RWPE1 (cell line): ENCODE measurements at regions of chr4 and their contacts with region 1.

Region 1: GRCh38 chr4:80184053-80184790 is 13.1 kb upstream of the PRDM8 start:
- DNase-seq: peak; percentile 74
- H3K27ac ChIP-seq: peak overlapping the region; percentile 53
- CTCF ChIP-seq: peak; percentile 96

Region 2: DNA sequence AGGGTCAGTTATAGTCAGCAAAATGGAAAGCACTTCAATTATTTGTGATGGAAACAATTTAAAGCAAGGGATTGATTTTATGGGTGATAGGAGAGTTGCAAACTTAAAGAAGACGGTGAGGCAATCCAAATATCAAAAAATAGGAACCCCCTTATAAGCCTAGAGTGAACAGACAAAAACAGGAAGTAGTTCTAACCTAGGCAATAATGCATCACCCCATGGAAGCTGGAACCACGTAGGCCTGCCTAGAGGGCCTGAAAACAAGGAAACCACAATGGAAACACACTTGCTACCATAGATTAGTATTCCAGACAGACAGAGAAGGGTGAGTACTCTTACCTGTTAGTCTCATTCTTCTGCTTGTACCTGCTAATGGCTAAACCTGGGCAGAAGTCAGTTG is 762.7 kb before region 1 on chr4:
- CTCF ChIA-PET with region 1: interaction called, 11 read pairs
- POLR2A ChIA-PET with region 1: no interaction called
- DNase-seq: no peak
- H3K27ac ChIP-seq: no peak overlapping the region
- CTCF ChIP-seq: no peak

Region 3: GRCh38 chr4:79763486-79764075 is 420.6 kb before region 1 on chr4:
- CTCF ChIA-PET with region 1: no interaction called
- POLR2A ChIA-PET with region 1: no interaction called
- DNase-seq: no peak
- H3K27ac ChIP-seq: no peak overlapping the region
- CTCF ChIP-seq: no peak